ENCODE measurements at regions of chr9 and their contacts with region 1.

Region 1: DNA sequence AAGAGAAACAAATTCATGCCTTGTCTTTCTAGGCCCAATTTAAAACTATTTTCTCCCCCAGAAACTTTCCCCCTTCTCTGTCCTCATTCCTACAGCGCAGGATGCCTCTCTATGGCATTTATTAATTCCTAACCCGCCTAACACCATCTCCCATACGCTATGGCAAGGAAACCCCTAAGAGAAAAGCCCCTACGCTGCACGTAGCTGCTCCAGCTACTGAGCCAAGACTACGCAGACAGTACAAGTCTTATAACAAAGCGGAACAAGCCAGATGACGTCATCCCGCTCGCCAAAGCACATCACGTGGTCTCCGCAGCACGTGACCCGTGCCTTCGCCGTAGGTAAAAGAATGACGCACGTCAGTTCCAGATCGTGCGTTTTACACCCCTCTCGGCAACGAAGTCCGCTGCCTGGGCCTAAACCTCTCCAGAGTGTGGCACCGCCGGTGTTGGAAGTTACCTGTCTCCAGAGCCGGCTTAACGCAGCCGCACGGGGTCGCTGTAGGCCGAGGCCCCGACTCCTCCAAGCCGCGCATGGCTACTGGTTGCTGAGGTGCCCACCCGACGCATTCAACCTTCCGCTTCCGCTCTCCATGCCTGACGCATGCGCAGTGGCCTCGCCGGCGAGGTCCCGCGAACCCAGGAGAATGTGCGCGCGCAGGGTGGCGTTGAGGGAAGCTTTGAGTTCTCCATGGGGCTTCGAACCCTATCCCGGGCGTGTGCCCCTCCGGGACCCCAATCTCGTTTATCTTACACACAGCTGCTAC is at the start of gene TRMO:
- DNase-seq: peak; percentile 97
- ATAC-seq: peak; percentile 74
- H3K4me3 Mint-ChIP-seq: peak within 1 kb of the TSS; percentile 85
- H3K27ac Mint-ChIP-seq: peak within 1 kb of the TSS; percentile 95
- H3K4me1 Mint-ChIP-seq: peaks cover 57% of the 10 kb centered on the region
- H3K27me3 Mint-ChIP-seq: peaks cover 2% of the 10 kb centered on the region
- CTCF ChIP-seq: no peak
- total RNA-seq, gene TRMO: 25.3 and 32.4 TPM in 2 replicates

Region 2: DNA sequence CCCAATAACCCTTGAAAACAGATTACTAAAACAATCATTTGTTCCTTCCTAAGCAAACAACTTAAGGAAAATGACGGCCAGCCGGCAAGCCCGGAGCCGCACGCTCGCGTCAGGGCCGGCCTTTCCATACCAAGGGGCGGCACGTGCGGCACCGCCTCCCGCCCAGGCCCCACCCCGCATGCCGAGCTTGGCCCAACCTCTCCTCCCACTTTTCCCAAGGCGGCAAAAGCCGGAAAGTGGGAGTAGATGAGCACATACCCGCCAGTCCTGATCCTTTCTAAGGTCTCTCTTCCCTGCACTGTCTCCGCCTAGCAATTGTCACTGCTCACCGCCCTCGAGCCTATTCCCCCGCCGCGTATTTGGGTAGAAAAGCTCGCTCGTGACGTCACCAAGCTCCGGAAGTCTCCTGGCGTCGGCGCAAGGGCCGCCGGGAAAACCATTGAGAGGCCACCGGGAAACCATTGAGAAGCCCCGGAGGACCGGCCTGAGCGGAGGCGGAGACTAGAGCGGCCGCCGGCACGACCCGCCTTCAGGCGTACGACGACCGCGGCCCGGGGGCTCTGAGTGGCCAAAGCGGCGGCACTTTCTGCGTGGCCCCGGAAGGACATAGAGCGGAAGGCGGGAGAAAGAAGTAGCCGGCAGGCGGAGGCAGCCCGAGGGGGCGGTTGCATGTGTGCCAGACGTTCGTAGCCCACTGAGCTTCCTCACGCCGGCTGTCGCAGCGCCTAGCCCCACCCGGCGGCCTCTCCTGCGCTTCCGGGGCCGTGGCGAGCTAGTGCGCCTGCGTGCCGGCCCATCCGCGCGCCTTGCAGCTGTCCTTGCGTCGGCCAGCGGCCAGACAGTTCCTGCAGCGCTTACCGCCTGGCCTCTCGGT is 288.9 kb before region 1 on chr9 and contains the starts of genes NCBP1 and TSTD2:
- CTCF ChIA-PET with region 1: no interaction called
- POLR2A ChIA-PET with region 1: interaction called, 19 read pairs
- intact Hi-C with region 1: loop called (anchors 1 kb)
- DNase-seq: peak; percentile 93
- ATAC-seq: peak; percentile 92
- H3K4me3 Mint-ChIP-seq: peak within 1 kb of the TSS; percentile 100
- H3K27ac Mint-ChIP-seq: peak within 1 kb of the TSS; percentile 99
- H3K4me1 Mint-ChIP-seq: peaks cover 47% of the 10 kb centered on the region
- H3K27me3 Mint-ChIP-seq: no peaks in the 10 kb centered on the region
- CTCF ChIP-seq: no peak
- total RNA-seq, gene NCBP1: 31.3 and 36.3 TPM in 2 replicates
- total RNA-seq, gene TSTD2: 18.0 and 21.6 TPM in 2 replicates

Region 3: DNA sequence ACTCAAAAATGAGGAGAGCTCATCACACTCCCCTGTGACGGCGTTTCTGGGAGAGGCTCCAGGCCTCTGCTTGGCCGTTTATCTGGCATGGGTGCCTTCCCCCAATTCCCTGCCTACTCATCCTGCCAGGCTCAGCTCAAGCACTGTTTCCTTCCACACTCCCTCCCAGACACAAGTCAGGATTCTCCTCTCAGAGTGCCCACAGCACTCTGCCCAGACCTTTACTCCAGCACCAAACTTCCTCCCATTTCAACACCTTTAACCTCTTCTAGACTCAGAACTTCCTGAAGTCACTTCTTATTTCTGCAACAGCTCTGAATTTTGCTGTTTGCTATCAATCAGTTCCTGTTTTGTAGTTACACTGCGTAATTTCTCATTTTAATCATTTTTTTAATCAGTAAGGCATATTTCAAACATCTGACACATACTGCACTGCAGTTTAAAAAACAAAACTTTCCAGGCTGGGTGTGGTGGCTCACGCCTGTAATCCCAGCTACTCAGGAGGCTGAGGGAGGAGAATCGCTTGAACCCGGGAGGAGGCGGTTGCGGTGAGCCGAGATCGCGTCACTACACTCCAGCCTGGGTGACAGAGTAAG is 15.8 kb before region 1 on chr9:
- CTCF ChIA-PET with region 1: interaction called, 11 read pairs
- POLR2A ChIA-PET with region 1: interaction called, 16 read pairs
- intact Hi-C with region 1: no loop called
- DNase-seq: no peak
- ATAC-seq: peak; percentile 57
- H3K4me3 Mint-ChIP-seq: peak overlapping the region; percentile 62
- H3K27ac Mint-ChIP-seq: peak overlapping the region; percentile 82
- H3K4me1 Mint-ChIP-seq: peaks cover 43% of the 10 kb centered on the region
- H3K27me3 Mint-ChIP-seq: no peaks in the 10 kb centered on the region
- CTCF ChIP-seq: no peak

Region 4: GRCh38 chr9:98034593-98035546 is 112.7 kb after region 1 on chr9:
- CTCF ChIA-PET with region 1: interaction called, 49 read pairs
- POLR2A ChIA-PET with region 1: interaction called, 12 read pairs
- intact Hi-C with region 1: loop called (anchors 1 kb)
- DNase-seq: peak; percentile 73
- ATAC-seq: peak; percentile 89
- H3K4me3 Mint-ChIP-seq: peak overlapping the region; percentile 1
- H3K27ac Mint-ChIP-seq: peak overlapping the region; percentile 36
- H3K4me1 Mint-ChIP-seq: peaks cover 47% of the 10 kb centered on the region
- H3K27me3 Mint-ChIP-seq: no peaks in the 10 kb centered on the region
- CTCF ChIP-seq: no peak

Region 5: GRCh38 chr9:98108531-98109031 is 186.4 kb after region 1 on chr9:
- CTCF ChIA-PET with region 1: no interaction called
- POLR2A ChIA-PET with region 1: interaction called, 11 read pairs
- intact Hi-C with region 1: no loop called
- DNase-seq: no peak
- ATAC-seq: peak; percentile 80
- H3K4me3 Mint-ChIP-seq: peak overlapping the region; percentile 59
- H3K27ac Mint-ChIP-seq: peak overlapping the region; percentile 98
- H3K4me1 Mint-ChIP-seq: peaks cover 68% of the 10 kb centered on the region
- H3K27me3 Mint-ChIP-seq: no peaks in the 10 kb centered on the region
- CTCF ChIP-seq: no peak

Region 6: GRCh38 chr9:98255578-98256296 is 333.6 kb after region 1 on chr9 and contains the start of gene TBC1D2:
- CTCF ChIA-PET with region 1: interaction called, 16 read pairs
- POLR2A ChIA-PET with region 1: interaction called, 47 read pairs
- intact Hi-C with region 1: loop called (anchors 1 kb)
- DNase-seq: peak; percentile 98
- ATAC-seq: peak; percentile 90
- H3K4me3 Mint-ChIP-seq: peak within 1 kb of the TSS; percentile 98
- H3K27ac Mint-ChIP-seq: peak within 1 kb of the TSS; percentile 99
- H3K4me1 Mint-ChIP-seq: peaks cover 13% of the 10 kb centered on the region
- H3K27me3 Mint-ChIP-seq: no peaks in the 10 kb centered on the region
- CTCF ChIP-seq: no peak
- total RNA-seq, gene TBC1D2: 2.1 and 2.7 TPM in 2 replicates

Measured in activated B cell treated with CpG ODN at 0.5 μM for 24 hours (primary cell).